ENCODE measurements at regions of chr1 and their contacts with region 1.

Region 1: DNA sequence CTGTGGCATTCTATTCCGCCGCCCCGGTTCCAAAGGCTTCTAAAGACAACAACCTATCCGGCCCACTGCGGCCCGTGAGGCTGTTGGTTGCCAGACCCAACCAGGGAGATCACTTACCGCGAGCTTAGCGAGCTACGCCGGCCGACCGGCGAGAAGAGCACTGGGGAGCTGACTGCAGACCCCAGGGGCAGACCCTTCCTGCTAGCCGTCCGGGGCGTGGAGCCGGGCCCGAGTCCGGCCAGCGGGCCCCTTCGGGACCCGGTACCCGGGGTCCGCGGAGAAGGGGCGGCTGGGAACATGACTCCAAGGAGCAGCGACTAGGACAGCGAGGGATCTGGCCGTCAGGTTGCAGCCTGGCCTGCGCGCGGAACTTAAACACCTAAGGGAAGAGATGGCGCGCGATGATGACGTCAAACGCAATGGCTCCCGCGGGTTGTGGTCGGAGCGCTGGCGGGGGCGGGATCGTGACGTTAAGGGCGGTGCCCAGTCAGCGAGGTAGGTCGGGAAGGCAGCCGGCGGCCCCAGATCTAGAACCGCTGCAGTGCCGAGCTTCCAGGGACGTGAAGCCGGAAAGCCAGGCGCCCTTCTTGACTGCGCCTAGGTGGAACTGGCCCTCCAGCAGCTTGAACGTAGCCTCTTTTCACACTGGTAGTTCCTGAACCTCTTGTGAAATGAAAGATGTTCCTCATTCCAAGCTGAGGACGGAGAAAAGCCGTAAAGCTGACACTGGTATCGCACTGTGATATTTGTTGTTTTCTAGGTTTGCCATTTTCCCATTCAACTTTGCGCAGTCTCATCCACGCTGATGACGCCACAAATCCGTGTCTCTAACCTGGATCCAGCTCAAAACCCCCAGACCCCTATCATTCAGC is at the start of gene NUP133:
- DNase-seq: peak; percentile 98
- ATAC-seq: peak; percentile 95
- H3K4me3 Mint-ChIP-seq: peak within 1 kb of the TSS; percentile 90
- H3K27ac Mint-ChIP-seq: peak within 1 kb of the TSS; percentile 95
- H3K4me1 Mint-ChIP-seq: peaks cover 20% of the 10 kb centered on the region
- H3K27me3 Mint-ChIP-seq: no peaks in the 10 kb centered on the region
- total RNA-seq, gene NUP133: 42.9 to 47.8 TPM

Region 2: GRCh38 chr1:229254910-229255541 is 253.2 kb before region 1 on chr1:
- POLR2A ChIA-PET with region 1: interaction called, 10 read pairs
- DNase-seq: no peak
- ATAC-seq: peak; percentile 46
- H3K4me3 Mint-ChIP-seq: peak overlapping the region; percentile 44
- H3K27ac Mint-ChIP-seq: peak overlapping the region; percentile 85
- H3K4me1 Mint-ChIP-seq: peaks cover 38% of the 10 kb centered on the region
- H3K27me3 Mint-ChIP-seq: no peaks in the 10 kb centered on the region

Region 3: GRCh38 chr1:229487181-229487580 is 21.0 kb before region 1 on chr1:
- POLR2A ChIA-PET with region 1: interaction called, 11 read pairs
- DNase-seq: no peak
- ATAC-seq: no peak
- H3K4me3 Mint-ChIP-seq: no peak overlapping the region
- H3K27ac Mint-ChIP-seq: no peak overlapping the region
- H3K4me1 Mint-ChIP-seq: peaks cover under 1% of the 10 kb centered on the region
- H3K27me3 Mint-ChIP-seq: no peaks in the 10 kb centered on the region

Region 4: DNA sequence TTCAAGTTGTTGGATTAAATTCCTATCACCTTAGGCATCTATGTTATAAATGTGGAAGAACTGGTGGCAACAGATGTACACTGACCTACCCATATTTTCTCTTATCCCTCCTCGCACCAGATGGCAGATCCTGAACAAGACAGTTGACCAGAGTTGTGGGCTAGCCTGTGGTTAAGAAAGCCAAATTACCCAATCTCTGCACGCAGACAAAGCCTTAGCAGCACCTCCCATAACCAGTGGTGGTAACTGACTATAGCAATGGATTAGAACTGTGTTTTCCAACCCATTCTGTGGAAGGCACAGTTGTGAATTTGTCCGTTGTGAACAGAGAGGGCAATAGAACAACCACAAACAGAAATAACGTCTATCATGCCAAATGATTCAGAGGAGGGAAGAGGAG is 29.7 kb after region 1 on chr1:
- POLR2A ChIA-PET with region 1: no interaction called
- DNase-seq: no peak
- ATAC-seq: no peak
- H3K4me3 Mint-ChIP-seq: no peak overlapping the region
- H3K27ac Mint-ChIP-seq: no peak overlapping the region
- H3K4me1 Mint-ChIP-seq: peaks cover 16% of the 10 kb centered on the region
- H3K27me3 Mint-ChIP-seq: no peaks in the 10 kb centered on the region

Region 5: DNA sequence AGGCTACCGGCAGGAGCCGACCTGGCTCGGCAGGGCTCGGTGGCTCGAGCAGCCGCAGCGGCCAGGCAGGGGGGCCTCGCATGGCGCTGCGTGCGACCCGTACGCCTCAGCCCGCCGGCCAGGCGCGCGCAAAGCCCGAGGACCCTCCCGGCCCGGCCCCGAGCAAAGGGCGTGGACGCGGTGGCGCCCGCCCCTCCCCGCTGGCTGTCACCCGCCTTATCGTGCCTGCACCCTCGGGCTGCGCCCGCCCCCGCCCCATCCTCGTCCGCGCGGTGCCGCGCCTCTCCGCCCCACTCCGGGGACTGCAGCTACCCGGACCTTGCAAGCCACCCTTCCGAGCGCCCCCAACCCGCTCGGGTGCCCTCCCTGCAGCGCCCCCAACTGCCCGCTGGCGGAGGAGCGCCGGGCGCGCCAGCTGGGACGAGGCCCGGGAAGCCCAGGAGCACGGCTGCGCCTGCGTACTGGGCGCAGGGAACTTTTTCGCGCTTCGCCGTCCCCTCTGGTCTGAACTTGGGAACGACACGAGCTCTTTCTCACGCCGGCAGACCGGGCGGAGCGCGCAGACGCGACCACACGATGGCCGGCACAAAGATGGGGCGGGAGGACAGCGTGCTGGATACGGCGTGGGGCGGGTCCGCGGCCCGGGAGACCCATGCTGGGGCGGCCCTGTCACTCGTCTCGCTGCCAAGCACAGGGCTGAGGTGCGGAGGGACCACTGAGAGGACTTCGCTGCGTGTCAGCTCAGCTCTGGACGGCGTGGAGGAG is 50.6 kb after region 1 on chr1 and contains the start of gene ABCB10:
- POLR2A ChIA-PET with region 1: interaction called, 18 read pairs
- DNase-seq: peak; percentile 91
- ATAC-seq: peak; percentile 83
- H3K4me3 Mint-ChIP-seq: peak within 1 kb of the TSS; percentile 90
- H3K27ac Mint-ChIP-seq: peak within 1 kb of the TSS; percentile 88
- H3K4me1 Mint-ChIP-seq: peaks cover 34% of the 10 kb centered on the region
- H3K27me3 Mint-ChIP-seq: no peaks in the 10 kb centered on the region
- total RNA-seq, gene ABCB10: 26.5 to 29.8 TPM

Region 6: DNA sequence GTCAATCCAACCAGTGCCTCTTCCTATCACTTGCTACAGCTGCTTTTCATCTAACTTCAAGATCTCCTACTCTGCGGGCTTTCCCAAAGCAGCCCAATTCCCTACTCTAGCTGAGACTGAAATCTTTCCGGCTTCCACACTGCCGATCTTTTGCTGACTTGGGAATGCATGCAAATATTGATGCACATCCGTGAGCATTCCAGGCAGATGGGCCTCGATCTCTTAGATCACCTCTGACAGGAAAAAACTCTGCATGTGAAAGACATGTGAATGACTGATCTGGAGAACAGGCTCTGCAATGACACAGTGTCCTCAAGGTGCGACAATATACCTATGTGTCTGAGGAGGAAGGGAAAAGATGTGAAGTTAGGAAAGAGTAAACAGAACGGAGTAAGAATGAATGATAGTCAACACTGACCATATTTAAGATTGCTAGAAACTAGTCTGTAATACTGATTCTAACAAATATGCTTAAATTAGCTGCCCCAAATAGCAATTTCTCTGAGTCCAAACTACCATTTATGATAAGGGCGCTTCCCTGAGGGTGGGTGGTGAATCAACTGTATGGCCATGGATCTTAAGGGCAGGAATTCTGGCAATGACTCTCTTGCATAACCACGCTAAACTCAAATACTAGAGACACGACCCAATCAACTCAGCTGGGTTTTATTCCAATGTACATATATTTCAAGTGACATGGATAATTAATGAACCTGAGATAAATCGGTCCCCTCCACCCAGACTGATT is 109.3 kb after region 1 on chr1:
- POLR2A ChIA-PET with region 1: no interaction called
- DNase-seq: no peak
- ATAC-seq: no peak
- H3K4me3 Mint-ChIP-seq: no peak overlapping the region
- H3K27ac Mint-ChIP-seq: no peak overlapping the region
- H3K4me1 Mint-ChIP-seq: peaks cover 13% of the 10 kb centered on the region
- H3K27me3 Mint-ChIP-seq: no peaks in the 10 kb centered on the region

Measured in activated naive CD8-positive, alpha-beta T cell treated with anti-CD3 and anti-CD28 coated beads, Interleukin-2, amount 10 ng/mL, durations not matched to agents 7 days and 5 days (primary cell).